CD4-positive, alpha-beta T cell (primary cell): ENCODE measurements at regions of chr12 and their contacts with region 1.

Region 1: GRCh38 chr12:69570545-69571399 is 14.5 kb upstream of the CCT2 start:
- DNase-seq: peak; percentile 15 to 87 (median 36)
- ATAC-seq: peak; percentile 88
- H3K4me3 ChIP-seq: no peak overlapping the region
- H3K4me3 Mint-ChIP-seq: no peak overlapping the region
- H3K27ac ChIP-seq: no peak overlapping the region
- H3K27ac Mint-ChIP-seq: no peak overlapping the region
- H3K4me1 ChIP-seq: no peaks in the 10 kb centered on the region
- H3K4me1 Mint-ChIP-seq: no peaks in the 10 kb centered on the region
- H3K27me3 ChIP-seq: no peaks in the 10 kb centered on the region
- H3K27me3 Mint-ChIP-seq: no peaks in the 10 kb centered on the region
- CTCF ChIP-seq: peak; percentile 92

Region 2: GRCh38 chr12:69290545-69291277 is 280.1 kb before region 1 on chr12:
- CTCF ChIA-PET with region 1: interaction called, 16 read pairs
- POLR2A ChIA-PET with region 1: interaction called, 6 read pairs
- intact Hi-C with region 1: loop called (anchors 1 kb)
- DNase-seq: peak; percentile 70 to 91 (median 78)
- ATAC-seq: peak; percentile 100
- H3K4me3 ChIP-seq: no peak overlapping the region
- H3K4me3 Mint-ChIP-seq: no peak overlapping the region
- H3K27ac ChIP-seq: no peak overlapping the region
- H3K27ac Mint-ChIP-seq: no peak overlapping the region
- H3K4me1 ChIP-seq: peaks cover 7% of the 10 kb centered on the region
- H3K4me1 Mint-ChIP-seq: peaks cover 6% of the 10 kb centered on the region
- H3K27me3 ChIP-seq: no peaks in the 10 kb centered on the region
- H3K27me3 Mint-ChIP-seq: peaks cover 35% of the 10 kb centered on the region
- CTCF ChIP-seq: peak; percentile 93

Region 3: GRCh38 chr12:69415471-69416275 is 155.1 kb before region 1 on chr12:
- CTCF ChIA-PET with region 1: no interaction called
- POLR2A ChIA-PET with region 1: no interaction called
- intact Hi-C with region 1: loop called in 1 of 2 experiments (anchors 2 kb)
- DNase-seq: peak in 3 of 14 experiments; percentile 5 to 21 (median 21)
- ATAC-seq: no peak
- H3K4me3 ChIP-seq: no peak overlapping the region
- H3K4me3 Mint-ChIP-seq: no peak overlapping the region
- H3K27ac ChIP-seq: no peak overlapping the region
- H3K27ac Mint-ChIP-seq: no peak overlapping the region
- H3K4me1 ChIP-seq: no peaks in the 10 kb centered on the region
- H3K4me1 Mint-ChIP-seq: no peaks in the 10 kb centered on the region
- H3K27me3 ChIP-seq: no peaks in the 10 kb centered on the region
- H3K27me3 Mint-ChIP-seq: no peaks in the 10 kb centered on the region
- CTCF ChIP-seq: peak; percentile 14

Region 4: GRCh38 chr12:69470189-69471075 is 100.3 kb before region 1 on chr12 and contains the start of gene FRS2:
- CTCF ChIA-PET with region 1: interaction called, 4 read pairs
- POLR2A ChIA-PET with region 1: no interaction called
- intact Hi-C with region 1: loop called in 1 of 2 experiments (anchors 10 kb)
- DNase-seq: peak; percentile 68 to 90 (median 82)
- ATAC-seq: peak; percentile 98
- H3K4me3 ChIP-seq: peak within 1 kb of the TSS; percentile 77
- H3K4me3 Mint-ChIP-seq: peak within 1 kb of the TSS; percentile 100
- H3K27ac ChIP-seq: peak within 1 kb of the TSS; percentile 63 to 72
- H3K27ac Mint-ChIP-seq: peak within 1 kb of the TSS; percentile 92
- H3K4me1 ChIP-seq: peaks cover 12% of the 10 kb centered on the region
- H3K4me1 Mint-ChIP-seq: peaks cover 55% of the 10 kb centered on the region
- H3K27me3 ChIP-seq: no peaks in the 10 kb centered on the region
- H3K27me3 Mint-ChIP-seq: no peaks in the 10 kb centered on the region
- CTCF ChIP-seq: no peak
- total RNA-seq, gene FRS2: 21.7 to 24.9 TPM

Region 5: GRCh38 chr12:69553627-69554248 is 17.0 kb before region 1 on chr12:
- CTCF ChIA-PET with region 1: interaction called, 13 read pairs
- POLR2A ChIA-PET with region 1: no interaction called
- intact Hi-C with region 1: no loop called
- DNase-seq: no peak
- ATAC-seq: no peak
- H3K4me3 ChIP-seq: no peak overlapping the region
- H3K4me3 Mint-ChIP-seq: no peak overlapping the region
- H3K27ac ChIP-seq: no peak overlapping the region
- H3K27ac Mint-ChIP-seq: no peak overlapping the region
- H3K4me1 ChIP-seq: no peaks in the 10 kb centered on the region
- H3K4me1 Mint-ChIP-seq: no peaks in the 10 kb centered on the region
- H3K27me3 ChIP-seq: no peaks in the 10 kb centered on the region
- H3K27me3 Mint-ChIP-seq: no peaks in the 10 kb centered on the region
- CTCF ChIP-seq: no peak